Natural killer cell (primary cell): ENCODE measurements at regions of chr2 and their contacts with region 1.

Region 1: DNA sequence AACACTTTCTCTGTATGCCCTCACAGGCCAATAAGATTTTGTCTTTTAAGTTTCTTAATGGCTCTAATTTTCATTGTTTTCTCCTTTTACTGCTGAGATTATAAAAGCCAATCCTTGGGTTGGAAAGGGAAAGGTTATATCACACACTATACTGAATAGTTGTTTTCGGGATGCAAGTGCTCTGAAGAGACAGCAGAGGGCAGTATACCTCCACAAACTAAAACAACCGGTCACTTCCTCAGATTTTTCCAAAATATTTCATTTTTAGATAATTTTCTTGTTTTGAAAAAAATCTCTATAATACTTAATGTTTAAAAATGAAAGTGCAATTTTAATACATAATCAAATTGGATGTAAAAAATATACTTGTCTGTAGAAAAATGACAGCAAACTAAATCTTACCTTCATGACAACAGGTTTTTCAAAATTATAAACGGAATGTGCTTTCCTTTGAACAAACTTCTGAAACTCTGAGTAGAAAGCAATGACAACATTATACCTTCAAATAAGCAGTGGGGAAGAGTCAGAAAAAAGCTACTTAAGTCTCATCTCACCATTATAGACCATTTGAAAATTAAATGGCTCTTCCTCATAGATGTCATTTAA is 82.7 kb downstream of the ORC4 start:
- DNase-seq: peak in 1 of 2 donors; percentile 60
- ATAC-seq: peak in 2 of 3 donors; percentile 71 to 74
- H3K4me3 ChIP-seq: no peak overlapping the region
- H3K4me3 Mint-ChIP-seq: no peak overlapping the region
- H3K27ac ChIP-seq: no peak overlapping the region
- H3K27ac Mint-ChIP-seq: no peak overlapping the region
- H3K4me1 ChIP-seq: no peaks in the 10 kb centered on the region
- H3K4me1 Mint-ChIP-seq: no peaks in the 10 kb centered on the region
- H3K27me3 ChIP-seq: no peaks in the 10 kb centered on the region
- H3K27me3 Mint-ChIP-seq: no peaks in the 10 kb centered on the region
- CTCF ChIP-seq: peak; percentile 99

Region 2: DNA sequence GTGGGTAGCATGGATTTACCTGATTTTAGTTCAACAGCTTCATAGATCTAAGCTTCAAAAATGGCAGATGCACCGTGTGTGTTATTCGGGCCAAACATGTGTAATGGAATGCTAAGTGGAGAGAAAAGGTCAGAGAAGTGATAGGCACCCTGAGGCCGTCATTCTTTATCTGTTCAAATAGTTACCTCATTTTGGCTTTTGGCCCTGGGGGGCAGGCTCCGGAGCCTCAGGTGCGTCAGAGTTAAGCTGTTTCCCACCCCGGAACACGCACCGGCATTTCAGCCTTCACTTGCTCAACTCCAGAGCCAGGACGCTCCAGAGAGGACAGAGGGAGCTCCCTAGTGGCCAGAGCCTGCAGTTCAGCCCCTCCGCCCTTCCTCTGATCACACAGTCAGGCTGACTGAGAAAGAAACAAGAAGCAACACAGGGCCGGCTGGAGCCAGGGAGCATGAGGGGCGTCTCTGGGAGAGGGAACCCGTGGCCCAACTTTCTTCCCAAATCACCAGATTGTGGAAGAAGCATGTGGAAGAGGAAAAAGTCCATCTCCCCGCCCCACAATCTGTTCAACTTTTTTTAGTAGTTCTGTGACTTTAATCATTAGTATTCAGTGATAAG is 571.5 kb after region 1 on chr2:
- intact Hi-C with region 1: loop called (anchors 1 kb)
- DNase-seq: peak; percentile 67 to 89
- ATAC-seq: peak; percentile 97 to 100 (median 100)
- H3K4me3 ChIP-seq: peak overlapping the region; percentile 8
- H3K4me3 Mint-ChIP-seq: peak overlapping the region; percentile 49
- H3K27ac ChIP-seq: no peak overlapping the region
- H3K27ac Mint-ChIP-seq: peak overlapping the region in 1 of 2 donors; percentile 51
- H3K4me1 ChIP-seq: peaks cover 5% of the 10 kb centered on the region
- H3K4me1 Mint-ChIP-seq: peaks cover 8 to 10% of the 10 kb centered on the region in 2 donors
- H3K27me3 ChIP-seq: no peaks in the 10 kb centered on the region
- H3K27me3 Mint-ChIP-seq: no peaks in the 10 kb centered on the region
- CTCF ChIP-seq: peak; percentile 78

Region 3: DNA sequence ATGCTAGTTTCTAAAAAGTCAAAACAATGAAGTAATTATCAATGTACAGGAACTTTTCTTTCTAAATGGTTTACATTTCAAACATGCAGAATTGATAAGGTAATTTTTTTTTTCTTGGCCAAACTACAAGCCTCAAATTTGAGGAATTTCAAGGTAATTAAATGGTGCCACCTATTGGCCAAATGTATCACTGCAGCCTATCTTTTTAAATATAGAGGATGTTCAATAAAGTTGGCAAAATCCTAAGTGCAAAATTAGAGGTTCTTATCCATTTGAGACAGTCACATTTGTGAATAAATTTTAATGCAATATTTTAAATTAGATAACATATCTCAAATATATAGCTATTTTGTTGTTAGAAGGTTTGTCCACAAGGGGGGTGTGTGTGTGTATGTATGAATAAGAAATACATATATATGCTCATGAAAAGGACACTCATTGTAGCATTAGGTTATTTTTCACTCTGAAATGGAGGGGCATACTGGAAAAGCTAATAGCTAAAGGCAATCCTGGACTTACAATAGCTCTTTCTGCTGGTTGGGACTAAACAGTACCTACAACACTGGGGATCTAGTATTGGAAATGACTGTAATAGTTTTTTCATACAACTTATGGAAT is 1623.6 kb after region 1 on chr2:
- intact Hi-C with region 1: loop called (anchors 5 kb)
- DNase-seq: peak in 1 of 2 donors; percentile 66
- ATAC-seq: peak; percentile 50 to 55 (median 50)
- H3K4me3 ChIP-seq: no peak overlapping the region
- H3K4me3 Mint-ChIP-seq: no peak overlapping the region
- H3K27ac ChIP-seq: no peak overlapping the region
- H3K27ac Mint-ChIP-seq: no peak overlapping the region
- H3K4me1 ChIP-seq: no peaks in the 10 kb centered on the region
- H3K4me1 Mint-ChIP-seq: peaks cover 0 to 4% of the 10 kb centered on the region in 2 donors
- H3K27me3 ChIP-seq: no peaks in the 10 kb centered on the region
- H3K27me3 Mint-ChIP-seq: peaks cover 0 to 10% of the 10 kb centered on the region in 2 donors
- CTCF ChIP-seq: peak; percentile 99